MCF 10A (cell line): ENCODE measurements at regions of chr18 and their contacts with region 1.

Region 1: DNA sequence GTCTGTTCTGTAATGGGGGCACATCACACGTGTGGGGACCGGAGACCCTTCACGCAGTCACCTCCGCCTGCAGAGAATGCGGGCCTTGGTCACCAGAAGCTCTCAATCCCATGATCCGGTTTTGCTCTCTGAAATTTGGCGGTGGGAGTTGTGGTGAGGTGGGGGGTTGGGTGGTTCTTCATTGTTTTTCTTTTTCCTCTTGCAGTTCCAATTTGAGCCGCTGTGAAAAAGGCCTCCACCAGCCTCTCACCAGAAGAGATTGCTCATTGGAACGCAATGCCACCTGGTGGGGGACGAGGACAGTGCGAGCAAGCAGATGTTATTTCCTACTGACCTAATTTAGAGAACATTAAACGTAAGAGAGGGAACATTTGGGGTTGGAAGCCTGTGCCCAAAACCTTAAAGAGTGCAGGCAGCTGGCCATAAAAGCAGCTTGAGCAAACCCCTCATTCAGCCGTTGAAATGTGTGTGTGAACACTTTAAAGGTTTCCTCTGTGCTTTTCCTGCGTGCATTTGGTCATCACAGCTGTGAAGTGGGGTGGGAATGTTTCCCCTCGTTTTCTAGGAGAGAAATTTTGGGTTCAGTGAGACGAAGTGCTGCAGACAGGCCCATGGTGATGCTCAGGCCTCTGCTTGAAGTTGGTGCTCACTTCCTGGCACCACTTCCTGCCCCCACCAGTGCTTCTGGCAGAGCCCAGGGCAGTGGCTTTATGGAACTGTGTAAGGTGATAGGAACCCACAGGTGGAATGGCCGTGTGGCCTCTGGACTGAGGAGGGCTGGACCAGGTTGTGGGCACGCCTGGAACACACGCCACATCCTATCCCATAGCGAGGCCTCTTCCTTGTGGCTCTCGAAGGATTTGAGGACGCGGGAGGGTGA is 61.7 kb downstream of the ZCCHC2 start:
- DNase-seq: peak; percentile 88
- H3K4me3 Mint-ChIP-seq: no peak overlapping the region
- H3K27ac Mint-ChIP-seq: peak overlapping the region; percentile 65
- H3K4me1 Mint-ChIP-seq: peaks cover 8% of the 10 kb centered on the region
- H3K27me3 Mint-ChIP-seq: no peaks in the 10 kb centered on the region
- CTCF ChIP-seq: peak; percentile 82

Region 2: GRCh38 chr18:61489334-61489733 is 1095.1 kb before region 1 on chr18:
- CTCF ChIA-PET with region 1: no interaction called
- POLR2A ChIA-PET with region 1: no interaction called
- intact Hi-C with region 1: no loop called
- DNase-seq: no peak
- H3K4me3 Mint-ChIP-seq: no peak overlapping the region
- H3K27ac Mint-ChIP-seq: no peak overlapping the region
- H3K4me1 Mint-ChIP-seq: no peaks in the 10 kb centered on the region
- H3K27me3 Mint-ChIP-seq: peaks cover 10% of the 10 kb centered on the region
- CTCF ChIP-seq: no peak

Region 3: GRCh38 chr18:62425465-62426195 is 158.9 kb before region 1 on chr18:
- CTCF ChIA-PET with region 1: interaction called, 6 read pairs
- POLR2A ChIA-PET with region 1: interaction called, 10 read pairs
- intact Hi-C with region 1: loop called (anchors 1 kb)
- DNase-seq: peak; percentile 97
- H3K4me3 Mint-ChIP-seq: peak overlapping the region; percentile 65
- H3K27ac Mint-ChIP-seq: peak overlapping the region; percentile 90
- H3K4me1 Mint-ChIP-seq: peaks cover 21% of the 10 kb centered on the region
- H3K27me3 Mint-ChIP-seq: no peaks in the 10 kb centered on the region
- CTCF ChIP-seq: peak; percentile 91

Region 4: GRCh38 chr18:62566199-62566598 is 18.3 kb before region 1 on chr18:
- CTCF ChIA-PET with region 1: interaction called, 90 read pairs
- POLR2A ChIA-PET with region 1: no interaction called
- intact Hi-C with region 1: no loop called
- DNase-seq: peak; percentile 32
- H3K4me3 Mint-ChIP-seq: no peak overlapping the region
- H3K27ac Mint-ChIP-seq: no peak overlapping the region
- H3K4me1 Mint-ChIP-seq: no peaks in the 10 kb centered on the region
- H3K27me3 Mint-ChIP-seq: no peaks in the 10 kb centered on the region
- CTCF ChIP-seq: peak; percentile 7

Region 5: GRCh38 chr18:62714671-62715435 is 130.4 kb after region 1 on chr18:
- CTCF ChIA-PET with region 1: interaction called, 34 read pairs
- POLR2A ChIA-PET with region 1: interaction called, 3 read pairs
- intact Hi-C with region 1: loop called (anchors 2 kb)
- DNase-seq: peak; percentile 99
- H3K4me3 Mint-ChIP-seq: peak overlapping the region; percentile 76
- H3K27ac Mint-ChIP-seq: peak overlapping the region; percentile 98
- H3K4me1 Mint-ChIP-seq: peaks cover 20% of the 10 kb centered on the region
- H3K27me3 Mint-ChIP-seq: no peaks in the 10 kb centered on the region
- CTCF ChIP-seq: peak; percentile 61

Region 6: GRCh38 chr18:62957885-62958472 is 373.5 kb after region 1 on chr18:
- CTCF ChIA-PET with region 1: interaction called, 31 read pairs
- POLR2A ChIA-PET with region 1: no interaction called
- intact Hi-C with region 1: loop called (anchors 1 kb)
- DNase-seq: peak; percentile 63
- H3K4me3 Mint-ChIP-seq: no peak overlapping the region
- H3K27ac Mint-ChIP-seq: no peak overlapping the region
- H3K4me1 Mint-ChIP-seq: no peaks in the 10 kb centered on the region
- H3K27me3 Mint-ChIP-seq: no peaks in the 10 kb centered on the region
- CTCF ChIP-seq: peak; percentile 49

Region 7: DNA sequence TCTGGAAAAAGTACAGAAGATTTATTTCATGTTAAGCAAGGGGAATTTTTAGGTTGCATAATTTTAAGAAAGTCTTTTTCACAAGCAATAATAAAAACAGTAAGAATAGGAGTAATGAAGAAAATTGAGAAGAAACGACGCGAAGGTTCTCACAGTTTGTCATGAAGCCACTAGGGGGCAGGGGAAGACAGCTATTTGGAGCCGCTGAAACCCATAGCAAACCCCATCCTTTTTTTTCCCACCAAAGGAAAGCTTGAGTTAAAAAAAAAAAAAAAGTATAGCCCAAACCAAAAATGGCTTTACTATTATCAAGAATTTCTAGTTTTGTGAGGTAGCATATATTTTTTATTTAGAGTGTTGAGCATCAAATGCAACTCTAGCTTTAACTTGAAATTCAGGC is 431.8 kb after region 1 on chr18:
- CTCF ChIA-PET with region 1: interaction called, 12 read pairs
- POLR2A ChIA-PET with region 1: no interaction called
- intact Hi-C with region 1: no loop called
- DNase-seq: peak; percentile 68
- H3K4me3 Mint-ChIP-seq: no peak overlapping the region
- H3K27ac Mint-ChIP-seq: no peak overlapping the region
- H3K4me1 Mint-ChIP-seq: no peaks in the 10 kb centered on the region
- H3K27me3 Mint-ChIP-seq: peaks cover 24% of the 10 kb centered on the region
- CTCF ChIP-seq: peak; percentile 76